ENCODE measurements at regions of chr7 and their contacts with region 1.

Region 1: DNA sequence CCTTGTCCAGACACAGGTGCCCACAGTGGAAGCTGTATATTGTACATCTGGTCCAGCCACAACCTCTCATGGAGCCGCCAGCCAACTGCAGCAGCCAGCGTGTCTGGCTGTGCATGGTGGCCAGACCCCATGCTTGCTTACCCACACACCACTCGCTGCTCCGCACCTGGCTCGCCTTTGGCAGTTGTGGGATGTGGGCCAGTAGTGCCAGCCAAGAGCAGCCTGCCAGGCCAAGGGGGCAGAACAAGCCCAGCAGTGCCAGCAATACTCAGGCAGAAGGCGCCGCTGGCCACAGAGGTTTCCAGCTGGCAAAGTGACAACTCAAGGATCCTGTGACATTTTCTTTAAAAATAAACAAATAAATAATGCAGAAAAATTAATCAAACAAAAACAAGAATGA is 11.7 kb upstream of the TMEM243 start:
- DNase-seq: no peak
- ATAC-seq: no peak
- H3K4me3 ChIP-seq: no peak overlapping the region
- H3K4me3 Mint-ChIP-seq: no peak overlapping the region
- H3K27ac ChIP-seq: no peak overlapping the region
- H3K27ac Mint-ChIP-seq: no peak overlapping the region
- H3K4me1 ChIP-seq: no peaks in the 10 kb centered on the region
- H3K4me1 Mint-ChIP-seq: peaks cover 0 to 12% (median 4%) of the 10 kb centered on the region in 7 donors
- H3K27me3 ChIP-seq: no peaks in the 10 kb centered on the region
- H3K27me3 Mint-ChIP-seq: peaks cover 0 to 4% (median 0%) of the 10 kb centered on the region in 5 donors

Region 2: DNA sequence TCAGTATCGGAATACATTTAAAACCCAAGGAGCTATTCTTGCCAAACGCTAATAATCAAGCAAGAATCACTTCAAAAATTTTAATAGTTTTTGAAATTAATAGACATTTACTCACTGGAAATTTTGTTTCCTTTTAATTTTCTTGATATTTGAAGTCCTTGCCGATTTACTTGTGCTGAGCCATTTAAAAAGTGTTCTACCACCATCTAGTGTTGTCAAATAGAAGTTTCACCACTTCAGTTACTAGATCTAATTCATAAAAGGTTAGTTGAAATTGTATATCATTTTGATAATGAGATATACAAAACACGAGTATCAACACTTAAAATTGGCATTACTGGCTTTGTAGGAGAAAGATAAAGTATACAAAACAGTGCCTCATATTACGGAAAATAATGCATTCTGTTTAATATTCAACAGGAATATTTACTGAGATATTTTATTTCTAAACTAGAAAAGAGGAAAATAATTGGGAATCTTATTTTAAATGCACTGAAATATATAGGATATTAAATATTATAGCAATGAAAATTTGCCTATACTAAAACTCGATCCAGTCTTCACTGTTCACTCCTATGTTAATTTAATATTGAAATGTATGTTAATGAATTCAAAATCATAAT is 1379.6 kb before region 1 on chr7:
- CTCF ChIA-PET with region 1: no interaction called
- POLR2A ChIA-PET with region 1: no interaction called
- intact Hi-C with region 1: no loop called
- DNase-seq: no peak
- ATAC-seq: no peak
- H3K4me3 ChIP-seq: no peak overlapping the region
- H3K4me3 Mint-ChIP-seq: no peak overlapping the region
- H3K27ac ChIP-seq: no peak overlapping the region
- H3K27ac Mint-ChIP-seq: no peak overlapping the region
- H3K4me1 ChIP-seq: no peaks in the 10 kb centered on the region
- H3K4me1 Mint-ChIP-seq: no peaks in the 10 kb centered on the region
- H3K27me3 ChIP-seq: no peaks in the 10 kb centered on the region
- H3K27me3 Mint-ChIP-seq: no peaks in the 10 kb centered on the region

Region 3: GRCh38 chr7:85997515-85997914 is 1233.7 kb before region 1 on chr7:
- CTCF ChIA-PET with region 1: no interaction called
- POLR2A ChIA-PET with region 1: no interaction called
- intact Hi-C with region 1: no loop called
- DNase-seq: no peak
- ATAC-seq: no peak
- H3K4me3 ChIP-seq: no peak overlapping the region
- H3K4me3 Mint-ChIP-seq: no peak overlapping the region
- H3K27ac ChIP-seq: no peak overlapping the region
- H3K27ac Mint-ChIP-seq: no peak overlapping the region
- H3K4me1 ChIP-seq: no peaks in the 10 kb centered on the region
- H3K4me1 Mint-ChIP-seq: no peaks in the 10 kb centered on the region
- H3K27me3 ChIP-seq: no peaks in the 10 kb centered on the region
- H3K27me3 Mint-ChIP-seq: no peaks in the 10 kb centered on the region

Region 4: DNA sequence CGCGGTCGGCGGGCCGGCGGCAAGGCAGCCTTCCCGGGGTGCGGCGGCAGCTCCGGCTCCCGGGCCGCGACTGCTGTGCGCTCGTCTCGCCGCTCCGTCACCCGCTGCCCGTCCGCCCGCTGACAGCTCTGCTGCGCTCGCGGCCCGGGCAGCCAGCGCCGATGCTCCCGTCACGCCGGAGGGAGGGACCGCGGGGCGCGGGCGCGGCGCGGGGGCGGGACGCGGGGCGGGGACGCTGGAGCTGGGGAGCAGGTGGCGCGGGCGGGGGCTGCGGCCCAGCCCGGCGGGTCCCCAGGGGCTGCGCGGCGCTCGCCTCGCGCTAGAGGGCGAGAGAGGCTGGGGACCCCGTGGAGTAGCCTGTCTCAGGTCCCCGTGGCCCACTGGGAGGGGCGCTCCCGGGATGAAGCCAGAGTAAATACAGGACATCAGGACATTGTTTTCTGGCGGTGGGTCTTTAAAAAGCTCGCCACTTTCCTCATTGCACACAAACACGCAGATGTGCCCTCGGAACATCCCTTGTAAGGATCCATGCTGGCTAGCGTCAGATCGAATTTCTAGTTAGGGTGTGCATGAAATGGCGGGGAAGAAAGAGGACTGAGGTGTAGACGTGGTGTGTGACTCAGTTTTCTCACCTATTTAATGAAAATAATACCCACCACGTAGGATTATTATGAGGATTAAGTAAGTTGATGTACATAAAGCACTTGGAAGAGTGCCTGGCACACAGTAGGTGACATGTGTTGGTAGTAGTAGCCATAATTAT is 171.6 kb before region 1 on chr7 and contains the start of gene ELAPOR2:
- CTCF ChIA-PET with region 1: no interaction called
- POLR2A ChIA-PET with region 1: no interaction called
- intact Hi-C with region 1: loop called in 1 of 2 experiments (anchors 2 kb)
- DNase-seq: peak; percentile 68 to 83 (median 75)
- ATAC-seq: peak; percentile 97
- H3K4me3 ChIP-seq: peak within 1 kb of the TSS; percentile 66
- H3K4me3 Mint-ChIP-seq: peak within 1 kb of the TSS; percentile 78 to 88 (median 84)
- H3K27ac ChIP-seq: peak within 1 kb of the TSS; percentile 52
- H3K27ac Mint-ChIP-seq: peak within 1 kb of the TSS in 8 of 9 donors; percentile 6 to 89 (median 70)
- H3K4me1 ChIP-seq: peaks cover 9 to 10% of the 10 kb centered on the region in 2 donors
- H3K4me1 Mint-ChIP-seq: peaks cover 7 to 18% (median 14%) of the 10 kb centered on the region in 7 donors
- H3K27me3 ChIP-seq: no peaks in the 10 kb centered on the region
- H3K27me3 Mint-ChIP-seq: peaks cover 9 to 23% (median 14%) of the 10 kb centered on the region in 5 donors
- total RNA-seq, gene ELAPOR2: 5.3 to 11.0 (median 6.4) TPM

Region 5: GRCh38 chr7:87188930-87189329 is 42.3 kb before region 1 on chr7:
- CTCF ChIA-PET with region 1: interaction called, 3 read pairs
- POLR2A ChIA-PET with region 1: interaction called, 3 read pairs
- intact Hi-C with region 1: loop called in 1 of 2 experiments (anchors 5 kb)
- DNase-seq: no peak
- ATAC-seq: no peak
- H3K4me3 ChIP-seq: no peak overlapping the region
- H3K4me3 Mint-ChIP-seq: no peak overlapping the region
- H3K27ac ChIP-seq: no peak overlapping the region
- H3K27ac Mint-ChIP-seq: peak overlapping the region in 5 of 9 donors; percentile 7 to 69 (median 26)
- H3K4me1 ChIP-seq: no peaks in the 10 kb centered on the region
- H3K4me1 Mint-ChIP-seq: peaks cover 2 to 54% (median 30%) of the 10 kb centered on the region in 7 donors
- H3K27me3 ChIP-seq: no peaks in the 10 kb centered on the region
- H3K27me3 Mint-ChIP-seq: no peaks in the 10 kb centered on the region

Region 6: DNA sequence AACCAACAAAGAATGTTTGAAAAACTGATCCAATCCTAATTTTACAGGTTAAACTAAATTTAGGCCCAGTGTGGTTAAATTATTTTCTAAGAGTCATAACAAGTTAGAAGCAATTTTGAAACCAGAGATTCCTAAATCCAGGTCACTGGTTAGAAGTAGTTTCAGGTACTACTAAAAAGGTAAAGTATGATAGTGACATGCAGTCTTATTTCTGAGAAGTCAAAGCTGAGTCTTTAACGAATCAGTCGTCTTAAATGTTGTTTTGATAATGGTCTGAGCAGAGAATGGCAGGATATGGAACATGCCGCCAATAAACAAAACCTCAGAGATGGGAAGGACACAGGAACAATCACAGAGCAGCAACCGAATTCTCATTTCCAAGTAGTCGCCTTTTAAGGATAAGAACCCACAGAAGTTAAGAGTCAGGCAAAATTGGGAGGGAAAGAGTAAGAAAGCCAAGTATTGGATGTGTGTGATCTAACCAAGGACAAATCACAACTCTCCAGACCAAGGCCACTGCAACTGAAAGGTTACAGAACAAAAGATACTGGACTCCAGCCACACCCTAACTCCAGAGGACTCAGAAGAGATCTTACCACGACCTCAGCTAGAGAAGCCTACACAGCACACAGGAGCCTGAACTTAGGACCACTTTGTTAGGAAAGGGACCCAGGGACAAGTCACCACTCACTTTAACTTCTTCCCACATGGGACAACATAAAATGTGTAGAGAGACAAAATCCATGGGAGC is 31.4 kb before region 1 on chr7:
- CTCF ChIA-PET with region 1: no interaction called
- POLR2A ChIA-PET with region 1: no interaction called
- intact Hi-C with region 1: loop called in 1 of 2 experiments (anchors 5 kb)
- DNase-seq: no peak
- ATAC-seq: peak; percentile 10
- H3K4me3 ChIP-seq: no peak overlapping the region
- H3K4me3 Mint-ChIP-seq: peak overlapping the region in 5 of 10 donors; percentile 3 to 15 (median 11)
- H3K27ac ChIP-seq: peak overlapping the region; percentile 36
- H3K27ac Mint-ChIP-seq: peak overlapping the region in 8 of 9 donors; percentile 37 to 88 (median 79)
- H3K4me1 ChIP-seq: peaks cover 0 to 40% of the 10 kb centered on the region in 2 donors
- H3K4me1 Mint-ChIP-seq: peaks cover 35 to 81% (median 68%) of the 10 kb centered on the region in 7 donors
- H3K27me3 ChIP-seq: no peaks in the 10 kb centered on the region
- H3K27me3 Mint-ChIP-seq: no peaks in the 10 kb centered on the region

Region 7: DNA sequence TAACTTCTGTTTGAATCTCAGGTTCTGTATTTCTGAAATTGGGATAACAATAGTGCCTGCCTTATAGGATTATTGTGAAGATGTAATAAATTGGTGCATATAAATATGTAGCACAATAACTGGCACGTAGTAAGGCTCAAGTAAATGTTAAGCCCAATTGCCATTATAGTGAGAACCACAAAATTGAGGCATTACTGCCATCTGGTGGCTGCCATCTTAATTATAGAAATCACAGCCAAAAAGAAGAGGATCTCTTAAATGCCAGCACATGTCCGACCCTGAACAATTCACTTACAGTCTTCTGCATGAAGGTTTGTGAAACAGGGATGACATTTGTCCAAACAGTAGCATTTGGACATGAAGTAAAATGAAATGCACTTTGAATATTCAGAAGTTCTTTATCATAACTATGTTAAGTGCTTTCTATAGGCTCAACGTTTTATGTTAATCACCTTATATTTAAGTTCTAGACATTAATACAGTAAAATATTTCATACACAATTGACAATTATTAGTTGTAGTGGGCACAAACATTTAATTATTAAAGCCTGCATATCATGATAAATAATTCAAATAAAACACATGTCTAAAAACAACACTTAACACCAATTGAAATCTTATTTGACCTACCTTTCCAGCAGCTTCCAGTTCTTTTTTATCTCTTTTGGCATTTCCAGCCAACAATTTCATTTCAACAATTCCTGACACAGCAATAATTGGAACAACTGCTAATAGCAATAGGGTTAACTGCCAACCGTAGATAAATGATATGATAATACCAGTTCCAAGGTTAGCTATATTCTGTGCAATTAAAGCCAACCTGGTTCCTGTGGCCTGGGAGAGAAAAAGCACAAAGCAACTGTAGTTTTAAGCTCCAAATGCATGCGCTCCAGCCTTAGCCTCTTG is 185.7 kb after region 1 on chr7:
- CTCF ChIA-PET with region 1: no interaction called
- POLR2A ChIA-PET with region 1: no interaction called
- intact Hi-C with region 1: loop called in 1 of 2 experiments (anchors 5 kb)
- DNase-seq: peak in 8 of 9 donors; percentile 43 to 73 (median 63)
- ATAC-seq: peak; percentile 82
- H3K4me3 ChIP-seq: no peak overlapping the region
- H3K4me3 Mint-ChIP-seq: no peak overlapping the region
- H3K27ac ChIP-seq: no peak overlapping the region
- H3K27ac Mint-ChIP-seq: no peak overlapping the region
- H3K4me1 ChIP-seq: no peaks in the 10 kb centered on the region
- H3K4me1 Mint-ChIP-seq: no peaks in the 10 kb centered on the region
- H3K27me3 ChIP-seq: no peaks in the 10 kb centered on the region
- H3K27me3 Mint-ChIP-seq: peaks cover 0 to 7% (median 0%) of the 10 kb centered on the region in 5 donors